CD4-positive, alpha-beta memory T cell (primary cell): ENCODE measurements at regions of chr3 and their contacts with region 1.

Region 1: DNA sequence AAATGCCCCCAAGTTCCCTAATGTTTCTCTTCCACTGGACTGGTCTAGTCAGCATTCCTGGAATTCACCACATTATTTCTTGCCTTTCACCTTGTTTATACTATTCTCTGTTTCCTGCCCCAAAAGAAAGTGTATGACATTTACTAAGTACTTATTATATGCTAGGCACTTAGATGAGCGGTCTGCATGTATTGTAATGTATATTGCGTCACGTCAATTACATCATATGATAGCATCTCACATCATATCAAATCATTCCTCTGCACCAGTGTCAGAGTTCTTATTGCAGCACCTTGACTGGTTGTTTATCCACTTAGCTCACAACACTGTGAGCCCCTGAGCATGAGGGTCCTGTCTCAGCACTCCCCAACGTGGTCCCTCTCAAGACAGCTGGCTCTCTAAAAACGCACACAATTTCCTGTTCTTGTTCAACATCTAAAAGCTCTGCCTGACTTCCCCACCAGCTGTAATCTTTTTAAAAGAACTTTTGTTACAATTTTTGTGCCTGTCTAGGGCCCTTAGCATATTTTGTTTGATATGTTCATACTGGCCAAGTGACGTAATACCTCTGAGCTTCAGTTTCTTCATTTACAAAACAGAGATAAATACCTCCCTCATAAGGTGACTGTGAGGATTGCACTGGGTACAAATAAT is 58.8 kb downstream of the ARHGAP31 start:
- DNase-seq: peak in 4 of 5 donors; percentile 32 to 49 (median 38)
- H3K4me3 ChIP-seq: no peak overlapping the region
- H3K4me3 Mint-ChIP-seq: peak overlapping the region in 3 of 8 donors; percentile 19 to 46 (median 44)
- H3K27ac ChIP-seq: no peak overlapping the region
- H3K27ac Mint-ChIP-seq: peak overlapping the region in 5 of 7 donors; percentile 8 to 70 (median 42)
- H3K4me1 ChIP-seq: peaks cover 24% of the 10 kb centered on the region
- H3K4me1 Mint-ChIP-seq: peaks cover 25 to 34% (median 27%) of the 10 kb centered on the region in 4 donors
- H3K27me3 ChIP-seq: no peaks in the 10 kb centered on the region
- H3K27me3 Mint-ChIP-seq: no peaks in the 10 kb centered on the region

Region 2: DNA sequence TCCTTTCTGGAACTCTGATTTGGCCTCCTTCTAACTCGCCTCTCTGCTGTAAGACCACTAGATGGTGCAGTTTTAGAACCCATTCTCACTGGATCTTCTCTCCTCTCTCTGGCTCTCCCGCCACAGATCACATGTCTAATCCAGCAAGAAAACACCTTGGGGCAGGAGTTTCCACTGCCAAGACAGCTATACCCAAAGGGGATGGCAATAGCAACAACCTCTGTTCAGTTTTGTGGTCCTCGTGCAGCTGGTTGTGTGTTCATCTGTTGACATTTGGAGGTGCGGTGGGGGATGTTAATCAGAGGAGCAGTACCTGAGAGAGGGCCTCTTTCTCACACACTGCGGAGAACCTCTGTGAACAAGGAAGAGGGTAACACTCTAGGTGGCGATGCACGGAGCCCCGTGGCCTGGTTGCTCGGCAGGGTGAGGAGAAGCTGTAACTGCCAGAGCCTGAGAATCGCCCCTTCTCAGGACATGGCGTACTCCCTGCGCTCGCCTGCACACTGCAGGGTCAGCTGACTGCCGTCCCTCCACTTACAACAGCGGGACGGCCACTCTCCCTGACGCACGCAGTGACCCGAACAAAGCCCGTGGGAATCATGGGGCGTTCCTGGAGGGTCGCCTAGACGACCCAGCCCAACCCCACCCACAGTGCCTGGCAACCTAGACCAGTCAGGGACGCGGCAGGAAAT is 207.3 kb before region 1 on chr3 and contains the start of gene TEX55:
- CTCF ChIA-PET with region 1: interaction called, 4 read pairs
- POLR2A ChIA-PET with region 1: no interaction called
- intact Hi-C with region 1: loop called (anchors 1 kb)
- DNase-seq: peak; percentile 11 to 40 (median 16)
- H3K4me3 ChIP-seq: no peak within 1 kb of the TSS
- H3K4me3 Mint-ChIP-seq: no peak within 1 kb of the TSS
- H3K27ac ChIP-seq: no peak within 1 kb of the TSS
- H3K27ac Mint-ChIP-seq: peak within 1 kb of the TSS in 2 of 7 donors; percentile 24 to 38
- H3K4me1 ChIP-seq: no peaks in the 10 kb centered on the region
- H3K4me1 Mint-ChIP-seq: peaks cover 0 to 4% (median under 1%) of the 10 kb centered on the region in 4 donors
- H3K27me3 ChIP-seq: no peaks in the 10 kb centered on the region
- H3K27me3 Mint-ChIP-seq: no peaks in the 10 kb centered on the region
- total RNA-seq, gene TEX55: not detected

Region 3: GRCh38 chr3:119302697-119303551 is 50.1 kb before region 1 on chr3:
- CTCF ChIA-PET with region 1: no interaction called
- POLR2A ChIA-PET with region 1: no interaction called
- intact Hi-C with region 1: no loop called
- DNase-seq: no peak
- H3K4me3 ChIP-seq: no peak overlapping the region
- H3K4me3 Mint-ChIP-seq: no peak overlapping the region
- H3K27ac ChIP-seq: no peak overlapping the region
- H3K27ac Mint-ChIP-seq: no peak overlapping the region
- H3K4me1 ChIP-seq: peaks cover 10% of the 10 kb centered on the region
- H3K4me1 Mint-ChIP-seq: peaks cover 11 to 37% (median 18%) of the 10 kb centered on the region in 4 donors
- H3K27me3 ChIP-seq: no peaks in the 10 kb centered on the region
- H3K27me3 Mint-ChIP-seq: no peaks in the 10 kb centered on the region

Region 4: DNA sequence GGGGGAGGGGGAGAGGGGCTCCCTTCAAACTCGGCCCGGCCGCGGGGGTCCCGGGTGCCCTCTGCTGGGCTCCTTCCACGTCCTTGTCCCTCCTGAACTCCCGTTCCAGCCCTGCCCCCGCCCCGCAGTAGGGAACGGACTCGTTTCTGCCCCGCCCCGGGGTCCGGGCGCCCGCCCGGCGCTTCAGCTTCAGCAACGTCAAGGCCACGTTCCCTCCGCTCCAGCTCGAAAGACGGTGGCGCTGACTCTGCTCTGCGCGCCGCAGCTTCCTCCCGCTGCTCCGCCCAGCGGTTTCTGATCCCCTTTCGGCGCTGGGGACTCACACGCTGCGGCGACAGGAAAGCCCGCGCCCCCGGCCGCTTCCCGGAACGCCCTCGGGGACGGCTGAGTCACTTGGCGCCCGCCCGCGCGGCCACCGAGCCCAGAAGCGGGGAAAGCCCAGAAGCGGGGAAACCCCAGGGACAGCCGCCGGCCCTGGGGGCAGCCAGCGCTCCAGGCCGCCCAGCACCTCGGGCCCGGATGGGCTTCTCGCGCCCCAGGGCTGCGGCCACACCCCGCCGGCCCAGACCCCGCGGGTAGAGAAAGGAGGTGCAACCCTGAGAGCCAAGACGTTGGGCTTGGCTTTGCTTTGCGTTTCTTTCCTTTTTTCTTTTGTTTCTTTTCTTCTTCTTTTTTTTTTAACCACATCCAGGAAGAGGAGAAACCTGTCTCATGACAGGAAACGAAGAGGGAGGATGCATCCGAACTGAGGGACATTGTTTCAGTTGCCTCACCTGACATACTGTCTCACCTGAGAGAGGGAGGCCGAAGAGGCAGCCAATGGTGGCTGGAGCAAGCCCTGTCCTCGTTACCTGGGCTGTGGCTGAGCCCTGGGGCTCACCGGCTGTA is 29.9 kb before region 1 on chr3:
- CTCF ChIA-PET with region 1: interaction called, 5 read pairs
- POLR2A ChIA-PET with region 1: interaction called, 3 read pairs
- intact Hi-C with region 1: loop called (anchors 2 kb)
- DNase-seq: peak; percentile 87 to 95 (median 89)
- H3K4me3 ChIP-seq: peak overlapping the region; percentile 20 to 73
- H3K4me3 Mint-ChIP-seq: peak overlapping the region; percentile 88 to 96 (median 90)
- H3K27ac ChIP-seq: peak overlapping the region; percentile 75
- H3K27ac Mint-ChIP-seq: peak overlapping the region; percentile 93 to 99 (median 97)
- H3K4me1 ChIP-seq: peaks cover 19% of the 10 kb centered on the region
- H3K4me1 Mint-ChIP-seq: peaks cover 13 to 38% (median 27%) of the 10 kb centered on the region in 4 donors
- H3K27me3 ChIP-seq: no peaks in the 10 kb centered on the region
- H3K27me3 Mint-ChIP-seq: no peaks in the 10 kb centered on the region

Region 5: GRCh38 chr3:119380697-119381096 is 27.7 kb after region 1 on chr3:
- CTCF ChIA-PET with region 1: no interaction called
- POLR2A ChIA-PET with region 1: no interaction called
- intact Hi-C with region 1: no loop called
- DNase-seq: no peak
- H3K4me3 ChIP-seq: no peak overlapping the region
- H3K4me3 Mint-ChIP-seq: no peak overlapping the region
- H3K27ac ChIP-seq: no peak overlapping the region
- H3K27ac Mint-ChIP-seq: peak overlapping the region in 1 of 7 donors; percentile 19
- H3K4me1 ChIP-seq: no peaks in the 10 kb centered on the region
- H3K4me1 Mint-ChIP-seq: no peaks in the 10 kb centered on the region
- H3K27me3 ChIP-seq: no peaks in the 10 kb centered on the region
- H3K27me3 Mint-ChIP-seq: no peaks in the 10 kb centered on the region